ENCODE measurements at regions of chr6 and their contacts with region 1.

Region 1: GRCh38 chr6:136783495-136784270 is 8.6 kb downstream of the MAP3K5 start:
- DNase-seq: no peak
- H3K4me3 ChIP-seq: no peak overlapping the region
- H3K27ac ChIP-seq: no peak overlapping the region
- H3K4me1 ChIP-seq: peaks cover 30% of the 10 kb centered on the region
- H3K27me3 ChIP-seq: no peaks in the 10 kb centered on the region

Region 2: DNA sequence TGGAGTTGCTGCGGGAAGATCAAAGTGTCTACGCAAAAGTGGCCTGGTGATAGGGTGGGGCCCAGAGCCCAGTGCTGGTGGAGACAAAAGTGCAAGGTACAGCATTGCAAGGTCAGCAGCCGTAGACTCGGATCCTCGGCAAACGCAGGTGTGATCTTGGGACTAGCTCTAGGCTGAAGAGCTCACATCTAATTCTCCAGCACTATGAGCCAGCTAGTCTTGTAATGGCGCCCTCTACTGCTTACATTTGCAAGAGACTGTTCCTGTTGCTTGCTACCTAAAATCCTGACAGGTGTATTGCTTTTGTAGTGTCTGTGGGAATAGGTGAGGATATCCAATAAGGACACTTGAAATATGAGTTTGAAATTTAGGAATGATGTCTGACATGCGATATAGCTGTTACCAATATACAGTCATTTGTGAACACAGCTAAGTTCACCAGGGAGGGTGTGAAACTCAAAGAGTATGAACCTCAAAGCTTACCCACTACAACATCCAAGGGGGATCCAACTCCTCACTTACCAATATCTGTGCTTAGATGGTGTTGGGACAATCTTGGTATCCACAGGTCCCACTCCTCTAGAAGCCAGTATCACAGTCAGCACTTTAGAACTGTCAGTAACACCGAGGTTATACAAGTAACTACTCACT is 873.8 kb before region 1 on chr6:
- in situ Hi-C with region 1: no loop called
- DNase-seq: peak; percentile 57
- H3K4me3 ChIP-seq: no peak overlapping the region
- H3K27ac ChIP-seq: no peak overlapping the region
- H3K4me1 ChIP-seq: peaks cover 15% of the 10 kb centered on the region
- H3K27me3 ChIP-seq: no peaks in the 10 kb centered on the region

Region 3: DNA sequence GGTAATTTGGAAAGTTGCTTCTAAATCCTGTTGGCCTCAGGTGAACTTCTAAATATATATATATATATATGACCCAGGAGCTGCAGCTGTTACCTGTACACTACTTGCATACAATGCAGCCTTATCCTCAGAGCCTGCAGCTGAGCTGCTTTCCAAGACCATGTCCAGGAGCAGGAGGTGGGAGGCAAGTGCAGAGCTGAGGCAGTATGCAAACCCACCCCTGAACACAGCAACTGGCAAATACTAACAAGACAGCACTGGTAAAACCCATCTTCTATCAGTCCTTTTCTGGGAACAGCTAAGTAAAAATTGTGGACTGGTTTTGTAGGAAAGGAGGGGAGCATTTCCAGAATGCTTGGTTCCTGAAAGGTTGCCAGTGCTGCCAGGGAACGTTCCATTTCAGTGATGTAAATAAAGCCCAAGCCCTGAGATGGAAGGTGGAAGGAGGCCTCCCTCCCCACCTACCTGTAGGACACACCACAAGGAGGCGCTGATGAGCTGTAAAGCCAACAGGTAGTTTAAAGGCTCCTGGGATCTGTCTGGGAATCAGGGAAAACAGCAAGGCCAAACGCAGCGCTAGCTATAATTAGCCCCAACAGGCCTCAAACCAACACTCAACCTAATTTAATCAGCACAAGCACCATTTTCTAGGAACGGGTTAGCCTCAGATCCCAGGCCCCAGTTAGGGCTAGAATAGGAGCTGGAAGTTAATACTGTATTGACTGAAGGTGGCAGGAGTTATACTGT is 139.7 kb before region 1 on chr6:
- in situ Hi-C with region 1: loop called (anchors 10 kb)
- DNase-seq: peak; percentile 70
- H3K4me3 ChIP-seq: no peak overlapping the region
- H3K27ac ChIP-seq: no peak overlapping the region
- H3K4me1 ChIP-seq: peaks cover 30% of the 10 kb centered on the region
- H3K27me3 ChIP-seq: no peaks in the 10 kb centered on the region